ENCODE measurements at regions of chr15 and their contacts with region 1.

Region 1: DNA sequence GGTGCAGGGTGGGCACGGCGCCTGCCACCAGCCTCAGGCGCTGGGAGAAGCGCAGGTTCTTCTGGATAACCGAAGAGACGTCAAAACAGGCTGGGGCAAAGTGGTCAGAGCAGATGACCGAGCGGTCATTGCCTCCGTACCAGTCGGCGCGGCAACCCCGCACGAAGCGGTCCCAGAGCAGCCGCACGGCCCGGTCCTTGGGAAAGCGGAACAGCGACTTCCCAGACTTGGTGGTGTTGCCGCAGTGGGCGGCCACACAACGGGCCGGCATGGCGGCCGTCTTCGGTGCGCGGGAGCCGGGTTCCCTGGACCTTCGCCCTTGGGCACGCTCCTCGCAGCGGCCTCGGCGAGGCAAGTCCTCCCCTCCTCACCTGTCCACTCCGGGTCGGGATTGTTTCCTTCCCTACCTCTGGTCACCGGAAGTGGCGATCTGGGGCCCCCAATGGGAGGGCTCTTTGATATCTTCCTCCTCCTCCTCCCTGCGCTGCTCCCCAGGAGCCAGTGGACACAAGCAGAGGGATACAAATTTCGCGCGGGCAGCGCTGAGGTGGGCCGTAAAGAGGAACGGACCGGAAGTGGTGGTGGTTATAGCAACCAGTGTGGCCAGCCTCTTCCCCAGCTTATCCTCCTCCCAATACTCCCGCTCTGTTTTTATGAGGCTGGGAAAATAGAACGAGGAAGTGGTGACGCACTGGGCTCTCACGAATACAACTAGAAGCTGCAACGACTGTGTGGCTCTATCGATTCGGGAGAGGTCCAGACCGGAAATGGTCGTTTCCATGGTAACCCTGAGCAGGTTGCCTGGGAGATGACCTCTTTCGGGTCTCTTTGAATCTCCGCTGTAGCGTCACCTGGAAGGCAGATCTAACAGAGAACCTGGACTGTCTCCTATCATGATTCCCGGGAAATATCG is at the starts of genes LRRC49 and THAP10:
- DNase-seq: peak; percentile 88
- total RNA-seq, gene LRRC49: 83.2 TPM
- total RNA-seq, gene THAP10: 3.5 TPM

Region 2: GRCh38 chr15:71008250-71008870 is 116.1 kb after region 1 on chr15:
- intact Hi-C with region 1: loop called (anchors 5 kb)
- DNase-seq: no peak

Region 3: GRCh38 chr15:71103102-71103676 is 210.9 kb after region 1 on chr15:
- intact Hi-C with region 1: loop called (anchors 5 kb)
- DNase-seq: no peak

Region 4: DNA sequence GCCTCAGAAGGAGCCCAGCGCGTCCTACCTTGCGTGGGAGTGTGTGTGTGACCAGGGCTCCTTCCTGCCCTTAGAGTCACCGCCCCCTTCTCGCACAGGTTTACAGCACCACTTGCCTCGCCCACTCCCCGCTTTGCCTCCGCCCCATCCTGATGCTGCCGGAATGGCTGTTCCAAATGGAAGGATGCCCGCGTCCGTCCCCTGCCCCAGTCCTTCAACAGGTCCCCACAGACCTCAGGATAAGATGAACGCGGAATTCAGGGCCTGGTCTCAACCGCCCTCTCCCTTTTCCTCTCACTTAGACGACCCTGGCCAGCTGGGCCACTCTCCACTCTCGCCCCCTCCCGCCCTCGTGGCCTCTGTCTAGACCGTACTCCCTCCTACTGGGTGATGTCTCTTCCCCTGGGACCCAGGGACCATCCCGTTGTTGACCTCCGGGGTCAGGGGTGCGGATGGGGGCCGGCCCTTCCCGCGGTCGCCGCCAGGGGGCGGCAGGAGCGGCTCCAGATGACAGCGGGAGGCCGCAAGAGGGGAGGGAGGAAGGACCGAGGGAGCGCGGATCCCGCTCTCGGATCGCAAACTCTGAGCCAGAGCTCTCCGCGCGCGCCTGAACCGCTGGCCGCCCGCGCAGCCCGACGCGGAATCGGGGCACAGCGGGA is 222.8 kb after region 1 on chr15 and contains the start of gene THSD4:
- intact Hi-C with region 1: no loop called
- DNase-seq: peak; percentile 83
- total RNA-seq, gene THSD4: 116 TPM